ENCODE measurements at regions of chr11 and their contacts with region 1.

Region 1: GRCh38 chr11:32713496-32713895 is 81.0 kb downstream of the CCDC73 start:
- DNase-seq: no peak
- ATAC-seq: no peak
- H3K4me3 ChIP-seq: no peak overlapping the region
- H3K27ac ChIP-seq: no peak overlapping the region
- H3K4me1 ChIP-seq: no peaks in the 10 kb centered on the region
- H3K27me3 ChIP-seq: no peaks in the 10 kb centered on the region
- CTCF ChIP-seq: peak; percentile 16 to 51 (median 19); a peak in 3 of 6 replicates
- EP300 ChIP-seq: no peak
- POLR2A ChIP-seq: no peak
- RAD21 ChIP-seq: peak; percentile 69

Region 2: GRCh38 chr11:32562839-32563599 is 150.5 kb before region 1 on chr11:
- CTCF ChIA-PET with region 1: no interaction called
- POLR2A ChIA-PET with region 1: no interaction called
- RAD21 ChIA-PET with region 1: no interaction called
- SMC1A ChIA-PET with region 1: no interaction called
- in situ Hi-C with region 1: no loop called
- intact Hi-C with region 1: no loop called
- DNase-seq: no peak
- ATAC-seq: no peak
- H3K4me3 ChIP-seq: no peak overlapping the region
- H3K27ac ChIP-seq: no peak overlapping the region
- H3K4me1 ChIP-seq: no peaks in the 10 kb centered on the region
- H3K27me3 ChIP-seq: no peaks in the 10 kb centered on the region
- CTCF ChIP-seq: no peak
- EP300 ChIP-seq: no peak
- POLR2A ChIP-seq: no peak
- RAD21 ChIP-seq: no peak

Region 3: GRCh38 chr11:32729976-32730375 is 16.5 kb after region 1 on chr11:
- CTCF ChIA-PET with region 1: interaction called, 13 read pairs
- POLR2A ChIA-PET with region 1: no interaction called
- RAD21 ChIA-PET with region 1: no interaction called
- SMC1A ChIA-PET with region 1: interaction called, 3 read pairs
- in situ Hi-C with region 1: no loop called
- intact Hi-C with region 1: no loop called
- DNase-seq: no peak
- ATAC-seq: no peak
- H3K4me3 ChIP-seq: no peak overlapping the region
- H3K27ac ChIP-seq: no peak overlapping the region
- H3K4me1 ChIP-seq: no peaks in the 10 kb centered on the region
- H3K27me3 ChIP-seq: no peaks in the 10 kb centered on the region
- CTCF ChIP-seq: no peak
- EP300 ChIP-seq: no peak
- POLR2A ChIP-seq: no peak
- RAD21 ChIP-seq: no peak